ENCODE measurements at regions of chr19 and their contacts with region 1.

Region 1: DNA sequence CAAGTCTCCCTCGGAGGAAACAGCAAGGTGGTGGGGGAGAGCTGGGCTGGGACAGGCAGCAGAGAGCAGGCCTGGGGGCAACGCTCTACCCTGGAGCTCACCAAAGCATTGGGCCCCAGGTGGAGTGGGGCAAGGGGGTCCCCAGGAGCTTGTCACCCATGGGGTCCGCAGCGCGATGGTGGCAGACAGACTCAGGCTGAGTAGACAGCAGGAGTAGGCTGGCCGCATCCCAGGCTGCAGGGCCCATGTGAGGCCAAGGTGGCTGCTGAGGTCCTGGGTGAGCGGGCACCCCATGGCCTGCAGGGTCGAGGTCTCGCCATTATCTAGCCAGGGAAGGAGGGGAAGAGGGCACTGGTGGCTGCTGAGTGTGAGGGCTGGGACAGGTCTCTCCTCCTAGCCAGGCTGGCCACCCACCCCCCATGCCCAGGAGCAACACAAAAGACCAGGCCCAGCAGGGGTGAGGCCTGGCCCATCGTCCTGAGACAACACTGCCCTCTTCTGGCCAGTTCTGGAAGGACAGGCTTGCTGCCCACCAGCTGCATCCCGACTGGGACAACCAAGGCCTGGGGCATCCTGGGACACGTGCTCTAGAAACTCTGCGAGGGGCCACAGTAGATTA is 33.1 kb downstream of the CEBPG start:
- DNase-seq: peak; percentile 75
- ATAC-seq: peak; percentile 77
- H3K4me3 Mint-ChIP-seq: no peak overlapping the region
- H3K27ac Mint-ChIP-seq: no peak overlapping the region
- H3K4me1 Mint-ChIP-seq: peaks cover 2% of the 10 kb centered on the region
- H3K27me3 Mint-ChIP-seq: no peaks in the 10 kb centered on the region

Region 2: DNA sequence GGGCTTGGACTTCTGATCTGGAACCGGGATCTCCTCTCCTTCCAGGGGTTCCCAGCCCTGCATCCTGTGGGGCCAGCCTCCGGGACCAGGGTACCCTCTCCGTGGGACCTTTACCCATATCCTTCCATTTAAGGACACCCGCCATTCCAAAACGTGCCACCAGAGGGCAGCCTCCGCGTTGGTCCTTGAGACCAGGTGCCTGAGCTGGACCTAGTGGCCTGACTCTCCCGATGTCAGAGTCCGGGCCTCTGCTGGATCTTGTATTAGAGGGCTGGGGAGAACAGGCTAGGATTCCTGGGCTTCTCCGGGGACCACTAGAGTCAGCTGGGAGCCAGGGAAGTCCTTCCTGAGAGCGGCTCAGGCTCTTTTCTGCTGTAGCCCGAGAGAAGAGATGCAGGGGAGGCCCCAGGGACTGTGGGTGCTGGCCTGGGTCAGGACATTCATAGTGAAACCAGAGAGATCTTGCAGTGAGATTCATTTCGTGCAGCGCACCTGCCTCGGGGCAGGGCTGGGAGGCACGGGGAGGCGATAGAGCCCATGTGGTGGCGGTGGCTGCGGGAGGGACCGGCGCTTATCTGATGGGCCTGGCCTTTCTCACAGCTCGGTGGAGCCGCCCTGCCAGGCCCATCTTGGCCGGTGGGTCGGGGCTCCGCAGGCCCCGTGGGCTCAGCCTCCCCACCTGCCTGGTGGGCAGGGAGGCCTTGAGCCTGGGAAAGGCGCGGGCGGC is 171.2 kb before region 1 on chr19:
- CTCF ChIA-PET with region 1: interaction called, 59 read pairs
- DNase-seq: peak; percentile 82
- ATAC-seq: peak; percentile 90
- H3K4me3 Mint-ChIP-seq: no peak overlapping the region
- H3K27ac Mint-ChIP-seq: peak overlapping the region; percentile 25
- H3K4me1 Mint-ChIP-seq: peaks cover 11% of the 10 kb centered on the region
- H3K27me3 Mint-ChIP-seq: peaks cover 18% of the 10 kb centered on the region

Region 3: DNA sequence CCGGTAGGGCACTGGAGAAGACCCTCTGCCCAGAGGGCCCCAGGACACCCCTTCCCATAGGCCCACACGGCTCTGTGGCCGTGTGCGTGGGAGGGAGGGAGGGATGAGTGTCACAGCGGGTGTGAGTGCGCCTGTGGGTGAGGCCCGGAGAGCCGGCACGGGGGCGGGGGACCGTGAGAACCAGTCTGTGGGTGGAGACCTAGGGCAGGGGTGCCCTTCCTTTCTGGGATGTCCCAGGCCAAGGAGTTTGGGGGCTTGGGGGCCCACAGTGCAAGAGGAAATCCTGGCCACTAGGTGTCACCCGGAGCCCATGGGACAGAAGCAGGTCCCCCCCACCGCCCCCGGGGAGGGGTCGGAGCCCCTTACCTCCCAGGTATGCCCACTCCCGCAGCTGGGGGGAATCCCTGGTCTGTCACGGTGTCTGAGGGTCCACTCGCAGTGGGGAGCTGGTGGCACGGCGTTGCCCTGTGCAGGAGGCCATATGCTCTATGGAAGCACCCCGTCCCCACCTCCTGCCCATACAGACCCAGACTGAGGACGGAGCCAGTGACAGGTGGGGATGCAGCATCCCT is 165.0 kb before region 1 on chr19:
- CTCF ChIA-PET with region 1: interaction called, 59 read pairs
- DNase-seq: no peak
- ATAC-seq: peak; percentile 44
- H3K4me3 Mint-ChIP-seq: no peak overlapping the region
- H3K27ac Mint-ChIP-seq: no peak overlapping the region
- H3K4me1 Mint-ChIP-seq: peaks cover 3% of the 10 kb centered on the region
- H3K27me3 Mint-ChIP-seq: peaks cover 5% of the 10 kb centered on the region